Activated T-helper 1 cell treated with anti-CD3 and anti-CD28 coated beads, Interleukin-12 subunit alpha, Interleukin-12 subunit beta, Interleukin-2, Interleukin-4 antibody, amounts not matched to agents 30 ng/mL and 10 ng/mL and 1 ng/mL, durations not matched to agents 14 hours and 24 hours and 36 hours (primary cell): ENCODE measurements at regions of chr11 and their contacts with region 1.

Region 1: DNA sequence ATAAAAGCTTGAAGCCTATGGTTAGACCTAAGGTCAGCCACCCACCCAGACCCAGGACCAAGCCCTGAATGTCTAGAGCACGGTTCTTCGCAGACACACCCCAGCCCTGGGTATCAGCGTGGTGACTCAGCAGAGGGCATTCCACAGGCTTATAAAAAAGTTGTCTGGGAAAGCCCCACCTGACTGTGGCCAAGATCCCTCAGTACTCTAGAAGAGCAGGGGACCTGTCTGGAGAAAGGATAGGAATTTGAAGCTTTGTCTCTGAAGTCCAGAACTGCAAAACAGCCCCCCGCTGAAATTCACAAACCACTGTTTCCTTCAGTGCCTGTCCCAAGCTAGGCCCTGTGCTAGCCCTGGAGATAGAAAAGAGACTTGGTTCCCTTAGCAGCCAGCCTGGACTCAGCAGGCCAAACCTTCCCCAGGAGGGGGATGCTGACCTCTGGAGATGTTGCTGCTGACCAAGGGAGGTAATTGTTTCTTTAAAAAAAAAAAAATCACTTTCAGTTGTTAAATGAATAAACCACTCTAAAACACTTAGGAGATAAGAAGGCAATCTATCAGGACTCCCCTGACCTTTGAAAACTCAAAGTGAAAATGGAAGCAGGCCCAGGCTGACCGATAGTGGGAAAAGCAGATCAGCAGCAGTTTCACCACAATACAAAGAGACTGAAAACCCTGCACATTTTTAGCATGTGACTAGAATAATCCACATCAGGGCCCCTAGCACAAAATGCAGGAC is 113.9 kb downstream of the ABTB2 start:
- DNase-seq: peak; percentile 36
- H3K4me3 Mint-ChIP-seq: peak overlapping the region; percentile 65
- H3K27ac Mint-ChIP-seq: peak overlapping the region; percentile 71
- H3K4me1 Mint-ChIP-seq: peaks cover 94% of the 10 kb centered on the region
- H3K27me3 Mint-ChIP-seq: peaks cover 11% of the 10 kb centered on the region

Region 2: DNA sequence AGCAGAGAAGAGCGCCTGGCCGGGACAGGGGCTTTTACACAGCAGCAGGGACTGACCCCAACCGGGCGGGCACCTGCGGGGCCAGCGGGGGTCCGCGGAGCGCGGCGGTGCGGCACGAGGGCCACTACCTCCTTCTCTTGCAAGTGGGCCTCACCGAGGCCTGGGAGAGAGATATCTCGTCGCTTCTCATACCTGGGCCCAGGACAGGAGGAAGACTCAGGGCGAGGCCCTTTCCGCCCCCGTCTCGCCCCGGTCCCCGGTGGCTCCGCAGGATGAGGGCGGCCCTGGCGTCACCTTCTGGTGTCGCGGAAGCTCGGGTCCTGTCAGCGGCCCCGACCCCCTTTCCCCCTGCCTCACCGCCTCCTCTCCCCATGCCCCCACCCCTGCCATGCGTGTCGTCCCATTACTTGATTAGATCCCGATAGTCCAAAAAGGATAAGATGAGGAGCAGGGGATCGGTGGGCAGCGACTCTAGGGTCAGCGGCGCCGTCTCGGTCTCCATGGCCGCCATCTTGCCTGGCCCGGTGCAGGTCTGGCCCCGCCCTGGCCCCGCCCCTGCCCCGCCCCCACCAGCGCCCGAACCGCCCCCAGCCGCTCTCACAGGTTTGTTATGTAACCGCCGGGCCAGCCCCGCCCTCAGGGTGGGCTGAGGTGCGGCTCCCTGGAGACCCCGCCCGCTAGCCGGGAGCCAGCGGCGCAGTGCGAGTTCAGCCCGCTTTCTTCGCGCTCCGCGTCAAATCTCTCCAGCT is 469.7 kb before region 1 on chr11 and contains the start of gene FBXO3:
- intact Hi-C with region 1: loop called (anchors 5 kb)
- DNase-seq: peak; percentile 80
- H3K4me3 Mint-ChIP-seq: peak within 1 kb of the TSS; percentile 94
- H3K27ac Mint-ChIP-seq: peak within 1 kb of the TSS; percentile 91
- H3K4me1 Mint-ChIP-seq: peaks cover 37% of the 10 kb centered on the region
- H3K27me3 Mint-ChIP-seq: peaks cover 29% of the 10 kb centered on the region
- total RNA-seq, gene FBXO3: 18.6 and 24.3 TPM in 2 replicates

Region 3: GRCh38 chr11:34105079-34105956 is 138.6 kb before region 1 on chr11 and contains the start of gene NAT10:
- intact Hi-C with region 1: loop called (anchors 1 kb)
- DNase-seq: peak; percentile 97
- H3K4me3 Mint-ChIP-seq: peak within 1 kb of the TSS; percentile 95
- H3K27ac Mint-ChIP-seq: peak within 1 kb of the TSS; percentile 90
- H3K4me1 Mint-ChIP-seq: peaks cover 48% of the 10 kb centered on the region
- H3K27me3 Mint-ChIP-seq: no peaks in the 10 kb centered on the region
- total RNA-seq, gene NAT10: 157 and 158 TPM in 2 replicates

Region 4: GRCh38 chr11:34214961-34215805 is 28.7 kb before region 1 on chr11:
- intact Hi-C with region 1: loop called (anchors 1 kb)
- DNase-seq: peak; percentile 19
- H3K4me3 Mint-ChIP-seq: peak overlapping the region; percentile 20
- H3K27ac Mint-ChIP-seq: peak overlapping the region; percentile 78
- H3K4me1 Mint-ChIP-seq: peaks cover 15% of the 10 kb centered on the region
- H3K27me3 Mint-ChIP-seq: peaks cover 13% of the 10 kb centered on the region

Region 5: DNA sequence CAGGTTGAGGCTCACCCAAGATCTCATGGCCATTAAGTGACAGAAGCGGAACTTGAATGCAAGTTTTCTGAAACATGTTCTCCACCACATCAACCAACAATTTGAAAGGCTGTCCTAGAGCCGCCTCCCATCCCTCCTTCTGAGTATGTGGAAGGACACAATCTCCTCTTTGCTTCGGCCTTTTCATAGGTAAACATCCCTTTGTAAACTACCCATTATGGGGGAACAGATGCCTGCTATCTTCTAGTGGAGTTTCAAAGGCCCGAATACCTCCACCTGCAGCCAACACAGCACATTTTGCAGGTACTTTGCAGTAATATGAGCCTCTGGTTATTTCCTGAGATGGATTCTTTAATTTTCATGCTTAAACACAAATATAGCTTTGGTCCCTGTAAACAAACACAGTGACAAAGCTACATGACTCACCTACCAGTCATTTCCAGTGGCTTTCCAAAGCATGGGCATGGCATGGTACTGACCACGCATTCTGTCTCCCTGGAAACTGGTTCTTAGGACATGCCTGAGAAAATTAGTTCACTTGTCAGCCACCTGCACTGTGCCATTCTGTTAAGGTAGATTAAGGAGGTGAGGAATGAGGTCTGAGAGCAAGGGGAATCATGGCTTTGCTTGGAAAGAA is 437.1 kb after region 1 on chr11:
- intact Hi-C with region 1: no loop called
- DNase-seq: no peak
- H3K4me3 Mint-ChIP-seq: no peak overlapping the region
- H3K27ac Mint-ChIP-seq: no peak overlapping the region
- H3K4me1 Mint-ChIP-seq: no peaks in the 10 kb centered on the region
- H3K27me3 Mint-ChIP-seq: peaks cover 10% of the 10 kb centered on the region

Region 6: DNA sequence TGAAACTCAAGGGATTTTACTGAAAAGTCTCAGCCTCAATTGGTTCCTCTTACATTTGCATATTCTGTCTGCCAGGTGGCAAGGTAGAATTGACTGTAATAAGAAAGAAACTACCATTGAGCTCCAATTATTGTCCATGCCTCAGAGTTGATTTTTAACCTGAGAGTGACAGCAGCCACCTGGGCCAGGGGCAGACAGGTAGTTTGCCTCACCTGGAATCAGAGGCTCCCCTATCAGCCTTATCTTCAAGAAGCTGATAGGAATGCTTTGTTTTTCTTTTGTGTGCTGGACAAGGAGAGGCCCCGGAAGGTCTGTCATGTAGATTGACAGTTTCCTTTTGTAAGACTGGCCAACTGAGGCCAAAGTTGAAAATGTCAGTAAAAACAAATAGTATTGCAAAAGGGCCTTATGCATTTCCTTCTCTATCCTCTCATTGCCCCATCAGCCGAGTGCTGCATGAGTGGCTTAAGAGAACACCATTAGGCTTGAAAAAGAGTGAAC is 929.2 kb after region 1 on chr11:
- intact Hi-C with region 1: loop called (anchors 5 kb)
- DNase-seq: no peak
- H3K4me3 Mint-ChIP-seq: peak overlapping the region; percentile 56
- H3K27ac Mint-ChIP-seq: peak overlapping the region; percentile 75
- H3K4me1 Mint-ChIP-seq: peaks cover 92% of the 10 kb centered on the region
- H3K27me3 Mint-ChIP-seq: no peaks in the 10 kb centered on the region

Region 7: GRCh38 chr11:35662649-35663407 is 1418.9 kb after region 1 on chr11 and contains the start of gene TRIM44:
- intact Hi-C with region 1: loop called (anchors 10 kb)
- DNase-seq: peak; percentile 79
- H3K4me3 Mint-ChIP-seq: peak within 1 kb of the TSS; percentile 89
- H3K27ac Mint-ChIP-seq: peak within 1 kb of the TSS; percentile 93
- H3K4me1 Mint-ChIP-seq: peaks cover 33% of the 10 kb centered on the region
- H3K27me3 Mint-ChIP-seq: peaks cover 18% of the 10 kb centered on the region
- total RNA-seq, gene TRIM44: 24.3 and 27.6 TPM in 2 replicates